K562 (cell line): ENCODE measurements at regions of chr14 and their contacts with region 1.

Region 1: GRCh38 chr14:23301288-23301968 is 1.2 kb downstream of the PPP1R3E start:
- DNase-seq: peak; percentile 94 to 99 (median 96)
- ATAC-seq: peak; percentile 90
- H3K4me3 ChIP-seq: peak overlapping the region; percentile 67
- H3K27ac ChIP-seq: peak overlapping the region; percentile 95
- H3K4me1 ChIP-seq: peaks cover 22 to 28% of the 10 kb centered on the region in 2 experiments
- H3K27me3 ChIP-seq: no peaks in the 10 kb centered on the region
- CTCF ChIP-seq: peak; percentile 65 to 76 (median 66)
- EP300 ChIP-seq: peak; percentile 81
- POLR2A ChIP-seq: no peak
- RAD21 ChIP-seq: peak; percentile 45 to 50

Region 2: DNA sequence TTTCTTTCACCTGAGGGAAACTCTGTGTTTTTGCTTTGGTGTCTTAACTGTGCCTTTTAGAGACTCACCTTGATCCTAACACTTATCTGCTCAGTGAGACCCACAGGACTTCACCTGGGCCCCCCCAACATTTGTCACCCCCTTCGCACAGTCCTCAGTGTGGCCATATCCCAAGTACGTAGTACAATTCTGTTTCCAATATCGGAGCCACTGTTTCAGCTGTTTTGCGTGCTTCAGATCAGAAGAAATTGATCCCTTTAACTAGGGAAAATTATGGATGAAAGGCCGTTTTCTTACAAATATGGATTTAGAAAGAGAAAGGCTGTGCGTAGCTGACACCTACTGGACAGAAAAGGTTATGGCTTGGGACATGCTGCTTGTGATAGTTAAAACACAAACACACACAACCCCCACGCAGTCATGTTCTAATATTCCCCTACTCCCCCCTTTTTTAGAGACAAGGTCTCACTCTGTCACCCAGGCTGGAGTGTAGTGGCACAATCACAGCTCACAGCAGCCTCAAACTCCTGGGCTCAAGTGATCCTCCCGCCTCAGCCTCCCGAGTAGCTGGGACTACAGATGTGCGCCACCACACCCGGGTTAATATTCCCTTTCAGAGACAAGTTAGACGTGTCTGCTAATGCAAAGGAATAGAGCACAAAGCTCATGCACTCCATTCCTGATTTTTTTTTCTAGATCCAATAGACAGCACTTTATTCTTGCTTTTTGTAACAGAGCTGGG is 114.3 kb before region 1 on chr14:
- CTCF ChIA-PET with region 1: interaction called, 5 read pairs
- POLR2A ChIA-PET with region 1: no interaction called
- in situ Hi-C with region 1: no loop called
- intact Hi-C with region 1: loop called (anchors 5 kb)
- DNase-seq: peak; percentile 68 to 81 (median 70)
- ATAC-seq: peak; percentile 89
- H3K4me3 ChIP-seq: no peak overlapping the region
- H3K27ac ChIP-seq: no peak overlapping the region; the same call in 2 of the 3 replicates
- H3K4me1 ChIP-seq: peaks cover 11 to 12% of the 10 kb centered on the region in 2 experiments; a peak in 4 of 5 replicates
- H3K27me3 ChIP-seq: no peaks in the 10 kb centered on the region
- CTCF ChIP-seq: peak; percentile 87 to 97 (median 93)
- EP300 ChIP-seq: no peak
- POLR2A ChIP-seq: no peak
- RAD21 ChIP-seq: peak; percentile 99 to 100

Region 3: GRCh38 chr14:23259426-23259825 is 42.0 kb before region 1 on chr14:
- CTCF ChIA-PET with region 1: interaction called, 58 read pairs
- POLR2A ChIA-PET with region 1: no interaction called
- in situ Hi-C with region 1: no loop called
- intact Hi-C with region 1: no loop called
- DNase-seq: no peak
- ATAC-seq: no peak
- H3K4me3 ChIP-seq: no peak overlapping the region
- H3K27ac ChIP-seq: no peak overlapping the region
- H3K4me1 ChIP-seq: peaks cover 0 to 7% of the 10 kb centered on the region in 2 experiments; a peak in 2 of 5 replicates
- H3K27me3 ChIP-seq: no peaks in the 10 kb centered on the region
- CTCF ChIP-seq: no peak
- EP300 ChIP-seq: no peak
- POLR2A ChIP-seq: no peak
- RAD21 ChIP-seq: no peak

Region 4: DNA sequence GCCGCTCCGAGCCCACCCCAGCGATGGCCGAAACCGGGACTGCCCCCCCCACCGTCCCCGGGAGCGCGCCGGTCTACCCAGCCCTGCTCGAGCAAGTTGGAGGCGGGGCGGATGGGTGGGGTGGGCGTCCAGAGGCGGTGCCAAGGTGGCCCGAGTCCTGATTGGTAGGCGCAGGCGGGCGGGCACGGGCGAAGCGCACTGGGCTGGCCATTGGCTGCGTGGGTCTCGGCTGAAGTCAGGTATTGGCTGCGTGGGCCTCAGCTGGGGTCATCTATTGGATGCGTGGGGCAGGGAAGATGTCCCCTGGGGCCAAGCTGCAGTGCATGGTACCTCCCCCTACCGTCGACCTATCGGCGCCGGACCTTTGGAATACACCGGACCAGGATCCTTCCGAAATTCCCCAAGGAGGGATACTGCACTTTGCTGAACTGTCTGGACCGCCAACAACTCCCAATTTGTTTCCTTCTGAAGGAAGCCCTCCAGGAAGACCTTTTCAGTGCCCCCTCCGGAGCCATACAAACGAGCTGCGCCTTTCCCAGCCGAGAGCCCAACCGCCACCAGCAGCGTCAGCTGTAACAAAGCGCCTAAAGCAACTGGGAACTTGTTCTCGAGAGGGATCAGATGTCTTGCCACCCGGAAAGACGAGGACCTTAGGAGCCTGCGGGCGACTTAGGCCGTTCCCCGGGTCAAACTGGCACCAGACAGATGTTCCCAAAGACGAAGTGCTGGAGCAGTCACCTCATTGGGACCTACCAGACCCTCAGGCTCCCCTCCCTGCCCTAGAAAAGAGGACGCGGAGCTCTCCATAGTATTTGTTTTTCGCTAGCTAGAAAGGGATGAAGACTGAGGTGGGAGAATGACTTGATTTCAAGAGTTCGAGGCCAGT is 15.2 kb before region 1 on chr14 and contains the start of gene HOMEZ:
- CTCF ChIA-PET with region 1: no interaction called
- POLR2A ChIA-PET with region 1: interaction called, 14 read pairs
- in situ Hi-C with region 1: no loop called
- intact Hi-C with region 1: loop called (anchors 2 kb)
- DNase-seq: peak; percentile 95 to 99 (median 96)
- ATAC-seq: peak; percentile 95
- H3K4me3 ChIP-seq: peak within 1 kb of the TSS; percentile 92
- H3K27ac ChIP-seq: peak within 1 kb of the TSS; percentile 94
- H3K4me1 ChIP-seq: peaks cover 7 to 21% of the 10 kb centered on the region in 2 experiments; a peak in 4 of 5 replicates
- H3K27me3 ChIP-seq: no peaks in the 10 kb centered on the region
- CTCF ChIP-seq: peak in 1 of 3 experiments; percentile 26; a peak in 1 of 6 replicates
- EP300 ChIP-seq: no peak
- POLR2A ChIP-seq: peak; percentile 87
- RAD21 ChIP-seq: no peak
- polyA plus RNA-seq, gene HOMEZ: 3.0 to 5.3 TPM